ENCODE measurements at regions of chr14 and their contacts with region 1.

Region 1: DNA sequence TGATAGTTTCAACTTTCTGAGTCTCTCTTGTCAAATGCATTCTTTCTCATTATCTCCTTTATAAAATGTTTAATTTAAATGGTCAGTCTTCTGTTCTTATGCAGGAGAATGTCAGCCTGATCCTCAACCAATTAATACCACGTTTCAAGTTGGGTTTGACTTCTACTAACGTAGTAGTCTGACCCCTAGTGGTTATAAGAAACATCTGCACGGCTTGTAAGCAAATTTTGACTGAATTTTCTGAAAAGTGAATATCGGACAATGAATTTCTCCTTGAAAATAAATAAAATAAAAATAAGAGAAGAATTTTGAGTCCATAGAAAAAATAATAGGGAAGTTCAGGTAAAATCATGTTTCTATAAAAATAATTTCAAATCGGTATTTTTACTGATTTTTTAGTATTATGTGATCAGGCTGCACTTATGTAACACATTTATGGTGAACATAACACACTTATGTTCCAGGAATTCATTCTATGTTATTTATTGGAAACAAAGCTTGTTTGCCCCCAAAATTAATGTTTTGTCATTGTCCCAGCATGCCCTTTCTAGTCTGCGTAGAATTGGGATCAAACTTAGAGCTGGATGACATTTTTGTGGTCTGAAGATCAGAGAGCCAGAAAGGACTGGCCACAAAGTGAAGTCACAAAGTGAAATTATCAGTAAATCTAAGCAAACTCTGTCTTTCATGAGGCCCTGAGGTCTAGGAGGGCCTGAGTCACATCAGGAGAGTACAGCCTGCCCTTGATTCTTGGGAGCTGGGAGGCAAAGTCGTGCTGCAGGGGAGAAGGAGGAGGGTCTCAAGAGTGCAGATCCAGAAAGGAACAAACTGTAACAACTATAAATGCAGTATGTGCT is 101.2 kb upstream of the STXBP6 start:
- DNase-seq: no peak
- H3K4me3 Mint-ChIP-seq: no peak overlapping the region
- H3K27ac Mint-ChIP-seq: no peak overlapping the region
- H3K4me1 Mint-ChIP-seq: no peaks in the 10 kb centered on the region
- H3K27me3 Mint-ChIP-seq: peaks cover 8% of the 10 kb centered on the region

Region 2: DNA sequence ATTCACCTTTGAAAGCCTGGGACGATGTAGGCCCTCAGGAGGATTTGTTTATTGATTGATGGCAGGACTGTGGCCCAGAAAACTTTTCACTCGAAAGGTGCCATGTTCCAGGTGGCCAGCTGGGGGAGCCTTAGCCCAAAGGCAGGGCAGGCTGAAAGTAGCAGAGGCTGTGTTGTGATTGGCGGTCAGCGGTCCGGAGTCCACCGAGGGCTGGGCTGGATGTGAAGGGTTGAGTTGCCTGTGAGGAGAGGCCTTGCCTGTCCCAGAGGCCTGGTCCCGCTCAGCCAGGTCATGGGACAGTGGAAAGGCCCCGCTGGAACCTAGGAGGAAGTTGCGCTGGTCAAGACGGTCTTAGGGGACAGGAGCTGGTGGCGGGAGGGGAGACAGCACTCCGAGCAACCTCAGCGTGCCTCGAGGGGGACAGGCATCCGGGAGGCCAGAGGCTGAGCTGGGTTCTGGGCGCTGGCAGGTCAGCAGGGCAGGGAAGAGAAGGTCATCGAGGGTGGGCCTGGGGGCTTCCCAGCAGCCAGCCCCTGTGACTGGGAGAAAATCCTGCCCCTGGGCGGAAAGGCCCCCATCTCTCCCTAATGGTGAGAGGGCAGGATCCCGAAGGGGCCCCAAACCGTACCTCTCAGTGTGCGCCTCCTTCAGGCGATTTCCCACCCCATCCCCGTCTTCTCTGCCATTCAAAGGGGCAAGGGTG is 669.4 kb before region 1 on chr14:
- intact Hi-C with region 1: loop called (anchors 5 kb)
- DNase-seq: peak; percentile 34
- H3K4me3 Mint-ChIP-seq: peak overlapping the region; percentile 61
- H3K27ac Mint-ChIP-seq: peak overlapping the region; percentile 57
- H3K4me1 Mint-ChIP-seq: peaks cover 22% of the 10 kb centered on the region
- H3K27me3 Mint-ChIP-seq: no peaks in the 10 kb centered on the region

Region 3: DNA sequence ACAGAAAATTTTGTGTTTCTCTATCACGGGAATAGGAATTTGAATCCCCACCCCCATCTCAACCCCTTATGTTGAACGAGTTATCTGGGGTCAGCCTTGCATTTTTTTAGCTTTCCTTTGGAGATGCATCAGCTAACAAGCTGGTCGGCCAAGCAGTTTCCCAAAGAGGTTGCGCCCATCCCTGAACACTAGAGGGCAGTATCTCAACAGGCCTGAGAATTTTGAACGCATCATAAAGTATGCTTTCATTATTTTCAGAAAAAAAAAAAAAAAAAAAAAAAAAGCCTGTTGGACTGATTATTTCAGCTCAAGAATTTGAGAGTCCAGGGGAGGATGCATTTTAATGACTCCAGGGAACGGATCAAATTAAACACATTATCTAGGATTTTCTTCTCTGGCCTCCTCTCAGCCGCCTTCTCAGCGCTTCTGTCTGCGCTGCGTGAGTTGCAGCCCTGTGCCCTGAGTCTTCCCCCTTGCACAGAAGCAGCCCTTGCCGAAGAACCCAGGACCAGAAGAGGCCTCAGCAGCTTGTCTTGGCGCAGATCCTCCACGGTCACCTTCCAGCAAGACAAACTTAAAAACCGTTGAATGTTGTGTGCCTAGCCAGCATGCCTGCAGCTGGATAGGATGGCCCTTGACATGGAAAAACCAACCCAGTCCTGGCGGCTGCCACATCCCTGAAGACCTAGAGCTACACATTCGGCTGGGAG is 440.6 kb before region 1 on chr14:
- intact Hi-C with region 1: loop called (anchors 1 kb)
- DNase-seq: peak; percentile 50
- H3K4me3 Mint-ChIP-seq: no peak overlapping the region
- H3K27ac Mint-ChIP-seq: no peak overlapping the region
- H3K4me1 Mint-ChIP-seq: peaks cover 6% of the 10 kb centered on the region
- H3K27me3 Mint-ChIP-seq: peaks cover 7% of the 10 kb centered on the region

Region 4: DNA sequence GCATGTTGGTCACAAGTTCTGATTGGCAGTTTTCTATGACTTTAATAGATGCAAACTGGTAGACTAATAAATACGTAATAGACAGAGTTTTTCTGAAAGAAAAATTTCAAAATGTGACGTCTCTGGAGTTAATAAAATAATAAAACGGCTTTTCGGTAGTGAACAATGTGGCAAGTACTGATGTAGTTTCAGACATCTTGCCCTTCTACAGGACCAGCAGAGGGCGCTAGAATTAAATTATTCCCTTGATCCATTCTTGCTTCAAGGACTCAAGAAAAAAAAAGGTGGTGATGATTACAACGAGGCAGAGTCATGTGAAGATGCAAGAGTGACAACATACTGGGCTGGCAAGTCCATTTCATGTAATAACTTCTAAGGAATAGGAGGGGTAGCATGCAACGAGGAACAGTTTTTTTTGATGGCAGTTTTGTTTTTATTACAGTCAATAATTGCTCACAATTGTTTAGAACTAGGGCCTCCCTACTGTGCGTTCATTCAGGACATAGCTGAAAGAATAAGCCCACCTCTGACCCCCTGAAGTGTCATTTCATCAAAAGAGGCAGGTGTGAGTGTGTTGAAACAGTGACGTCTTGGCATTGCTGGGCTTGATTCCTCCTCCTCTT is 416.2 kb before region 1 on chr14:
- intact Hi-C with region 1: loop called (anchors 5 kb)
- DNase-seq: no peak
- H3K4me3 Mint-ChIP-seq: no peak overlapping the region
- H3K27ac Mint-ChIP-seq: no peak overlapping the region
- H3K4me1 Mint-ChIP-seq: no peaks in the 10 kb centered on the region
- H3K27me3 Mint-ChIP-seq: peaks cover 13% of the 10 kb centered on the region

Measured in activated T-helper 1 cell treated with anti-CD3 and anti-CD28 coated beads, Interleukin-12 subunit alpha, Interleukin-12 subunit beta, Interleukin-2, Interleukin-4 antibody, amounts not matched to agents 30 ng/mL and 10 ng/mL and 1 ng/mL, durations not matched to agents 14 hours and 24 hours and 36 hours (primary cell).